ENCODE measurements at regions of chr16 and their contacts with region 1.

Region 1: GRCh38 chr16:11535471-11535870 is 51.2 kb downstream of the LITAF start:
- DNase-seq: no peak
- ATAC-seq: no peak
- H3K4me3 ChIP-seq: no peak overlapping the region
- H3K4me3 Mint-ChIP-seq: no peak overlapping the region
- H3K27ac ChIP-seq: no peak overlapping the region
- H3K27ac Mint-ChIP-seq: no peak overlapping the region
- H3K4me1 ChIP-seq: peaks cover 0 to 34% of the 10 kb centered on the region in 2 experiments
- H3K4me1 Mint-ChIP-seq: peaks cover 12 to 23% (median 15%) of the 10 kb centered on the region in 3 donors
- H3K27me3 ChIP-seq: no peaks in the 10 kb centered on the region
- H3K27me3 Mint-ChIP-seq: no peaks in the 10 kb centered on the region

Region 2: GRCh38 chr16:11484691-11485258 is 50.7 kb before region 1 on chr16:
- CTCF ChIA-PET with region 1: no interaction called
- POLR2A ChIA-PET with region 1: no interaction called
- DNase-seq: no peak
- ATAC-seq: no peak
- H3K4me3 ChIP-seq: no peak overlapping the region
- H3K4me3 Mint-ChIP-seq: no peak overlapping the region
- H3K27ac ChIP-seq: no peak overlapping the region
- H3K27ac Mint-ChIP-seq: no peak overlapping the region
- H3K4me1 ChIP-seq: no peaks in the 10 kb centered on the region
- H3K4me1 Mint-ChIP-seq: no peaks in the 10 kb centered on the region
- H3K27me3 ChIP-seq: no peaks in the 10 kb centered on the region
- H3K27me3 Mint-ChIP-seq: no peaks in the 10 kb centered on the region

Region 3: GRCh38 chr16:11560701-11561449 is 25.4 kb after region 1 on chr16:
- CTCF ChIA-PET with region 1: interaction called, 3 to 13 read pairs
- POLR2A ChIA-PET with region 1: interaction called in 1 of 2 experiments, 4 read pairs
- DNase-seq: peak; percentile 45 to 94 (median 82)
- ATAC-seq: peak; percentile 91 to 96 (median 93)
- H3K4me3 ChIP-seq: peak overlapping the region; percentile 48 to 64
- H3K4me3 Mint-ChIP-seq: peak overlapping the region; percentile 73 to 83 (median 79)
- H3K27ac ChIP-seq: peak overlapping the region; percentile 95
- H3K27ac Mint-ChIP-seq: peak overlapping the region; percentile 87 to 90
- H3K4me1 ChIP-seq: peaks cover 31 to 97% of the 10 kb centered on the region in 2 experiments
- H3K4me1 Mint-ChIP-seq: peaks cover 85 to 92% (median 87%) of the 10 kb centered on the region in 3 donors
- H3K27me3 ChIP-seq: no peaks in the 10 kb centered on the region
- H3K27me3 Mint-ChIP-seq: no peaks in the 10 kb centered on the region

Region 4: GRCh38 chr16:11576427-11577289 is 41.2 kb after region 1 on chr16:
- CTCF ChIA-PET with region 1: interaction called, 7 to 16 read pairs
- POLR2A ChIA-PET with region 1: no interaction called
- DNase-seq: no peak
- ATAC-seq: no peak
- H3K4me3 ChIP-seq: no peak overlapping the region
- H3K4me3 Mint-ChIP-seq: peak overlapping the region in 2 of 3 donors; percentile 32 to 51
- H3K27ac ChIP-seq: peak overlapping the region; percentile 32
- H3K27ac Mint-ChIP-seq: peak overlapping the region; percentile 58 to 79
- H3K4me1 ChIP-seq: peaks cover 8 to 94% of the 10 kb centered on the region in 2 experiments
- H3K4me1 Mint-ChIP-seq: peaks cover 74 to 89% (median 81%) of the 10 kb centered on the region in 3 donors
- H3K27me3 ChIP-seq: no peaks in the 10 kb centered on the region
- H3K27me3 Mint-ChIP-seq: no peaks in the 10 kb centered on the region

Region 5: DNA sequence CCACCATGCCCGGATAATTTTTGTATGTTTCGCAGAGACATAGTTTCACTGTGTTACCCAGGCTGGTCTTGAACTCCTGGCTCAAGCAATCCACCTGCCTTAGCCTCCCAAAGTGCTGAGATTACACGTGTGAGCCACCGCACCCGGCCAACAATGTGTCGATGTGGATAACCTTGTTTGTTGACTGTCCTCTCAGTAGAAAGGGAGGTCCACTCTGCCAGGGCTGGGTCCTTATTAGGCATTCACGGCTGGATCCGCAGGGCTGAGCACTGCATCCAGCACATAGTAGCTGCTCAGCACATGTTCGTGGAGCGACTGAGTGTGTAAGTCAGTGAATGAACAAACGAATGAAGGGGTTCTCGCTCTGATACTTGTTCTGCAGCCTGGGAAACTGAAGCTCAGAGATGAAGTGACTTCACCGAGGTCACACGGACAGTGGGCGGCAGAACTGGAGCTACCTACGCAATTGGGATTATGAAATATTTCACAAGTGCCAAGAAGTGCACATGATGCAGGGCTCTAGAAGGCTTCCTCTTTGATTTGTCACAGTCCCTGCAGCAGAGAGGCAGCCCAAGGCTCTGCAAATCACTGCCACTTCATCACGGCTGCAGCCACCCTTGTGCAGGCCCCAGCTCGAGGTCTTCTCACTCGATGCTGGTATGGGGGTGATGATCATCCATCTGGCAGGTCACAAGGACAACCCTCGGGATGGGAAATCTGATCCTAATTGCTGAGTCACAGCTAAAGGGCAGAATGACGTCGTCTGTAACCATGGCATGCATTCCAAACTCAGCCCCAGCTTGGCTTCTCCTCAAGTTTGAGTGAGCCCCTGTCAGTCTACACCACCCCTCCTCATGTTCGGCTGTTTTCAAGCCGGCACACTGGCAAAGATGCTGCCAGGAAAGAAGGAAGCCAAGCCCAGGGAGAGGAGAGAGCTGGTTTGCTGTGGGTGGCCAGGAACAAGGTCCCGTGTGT is 104.7 kb after region 1 on chr16:
- CTCF ChIA-PET with region 1: interaction called, 15 to 25 read pairs
- POLR2A ChIA-PET with region 1: no interaction called
- DNase-seq: peak in 5 of 35 experiments; percentile 14 to 53 (median 33)
- ATAC-seq: peak in 1 of 4 experiments; percentile 18
- H3K4me3 ChIP-seq: no peak overlapping the region
- H3K4me3 Mint-ChIP-seq: no peak overlapping the region
- H3K27ac ChIP-seq: no peak overlapping the region
- H3K27ac Mint-ChIP-seq: peak overlapping the region in 1 of 2 donors; percentile 48
- H3K4me1 ChIP-seq: peaks cover 4 to 17% of the 10 kb centered on the region in 2 experiments
- H3K4me1 Mint-ChIP-seq: peaks cover 15 to 31% (median 25%) of the 10 kb centered on the region in 3 donors
- H3K27me3 ChIP-seq: no peaks in the 10 kb centered on the region
- H3K27me3 Mint-ChIP-seq: no peaks in the 10 kb centered on the region

Region 6: GRCh38 chr16:11658894-11659708 is 123.6 kb after region 1 on chr16:
- CTCF ChIA-PET with region 1: interaction called in 1 of 2 experiments, 10 read pairs
- POLR2A ChIA-PET with region 1: no interaction called
- DNase-seq: no peak
- ATAC-seq: no peak
- H3K4me3 ChIP-seq: no peak overlapping the region
- H3K4me3 Mint-ChIP-seq: no peak overlapping the region
- H3K27ac ChIP-seq: no peak overlapping the region
- H3K27ac Mint-ChIP-seq: no peak overlapping the region
- H3K4me1 ChIP-seq: peaks cover 6 to 29% of the 10 kb centered on the region in 2 experiments
- H3K4me1 Mint-ChIP-seq: peaks cover 15 to 30% (median 18%) of the 10 kb centered on the region in 3 donors
- H3K27me3 ChIP-seq: peaks cover 0 to 6% of the 10 kb centered on the region in 2 experiments
- H3K27me3 Mint-ChIP-seq: no peaks in the 10 kb centered on the region

Region 7: GRCh38 chr16:11706180-11706742 is 170.8 kb after region 1 on chr16:
- CTCF ChIA-PET with region 1: interaction called, 5 to 10 read pairs
- POLR2A ChIA-PET with region 1: interaction called in 1 of 2 experiments, 4 read pairs
- DNase-seq: no peak
- ATAC-seq: no peak
- H3K4me3 ChIP-seq: no peak overlapping the region
- H3K4me3 Mint-ChIP-seq: no peak overlapping the region
- H3K27ac ChIP-seq: no peak overlapping the region
- H3K27ac Mint-ChIP-seq: no peak overlapping the region
- H3K4me1 ChIP-seq: no peaks in the 10 kb centered on the region
- H3K4me1 Mint-ChIP-seq: peaks cover 18 to 21% (median 20%) of the 10 kb centered on the region in 3 donors
- H3K27me3 ChIP-seq: no peaks in the 10 kb centered on the region
- H3K27me3 Mint-ChIP-seq: no peaks in the 10 kb centered on the region

Region 8: DNA sequence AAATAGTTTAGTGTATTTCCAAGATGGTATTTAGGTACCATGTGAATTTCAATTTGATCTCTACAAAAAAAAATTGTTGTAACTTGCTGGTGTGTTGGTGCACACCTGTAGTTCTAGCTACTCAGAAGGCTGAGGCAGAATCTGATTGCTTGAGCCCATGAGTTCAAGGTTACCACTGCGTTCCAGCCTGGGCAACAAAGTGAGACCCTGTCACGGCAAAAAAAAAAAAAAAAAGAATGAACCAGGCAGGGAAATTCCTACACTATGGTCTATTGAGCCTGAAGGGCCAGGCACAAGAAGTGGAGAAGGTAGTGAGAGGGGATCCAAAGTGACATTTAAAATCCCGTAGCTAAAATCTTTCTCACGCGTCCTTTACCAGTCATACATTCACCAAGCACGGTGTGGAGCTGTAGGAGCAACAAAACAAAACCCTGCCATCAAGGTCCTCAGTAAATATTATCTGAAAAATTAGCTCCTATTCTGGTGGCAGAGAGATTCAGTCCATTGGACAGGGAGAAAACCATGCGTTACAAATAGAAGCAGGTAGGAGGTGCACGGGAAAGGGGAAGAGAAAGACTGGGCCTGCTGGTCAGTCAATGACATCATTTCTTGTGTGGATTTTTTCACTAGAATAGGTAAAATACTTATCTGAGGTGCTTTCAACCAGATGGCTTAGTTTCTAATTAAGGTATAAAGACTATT is 179.9 kb after region 1 on chr16:
- CTCF ChIA-PET with region 1: interaction called, 9 to 27 read pairs
- POLR2A ChIA-PET with region 1: interaction called in 1 of 2 experiments, 3 read pairs
- DNase-seq: no peak
- ATAC-seq: peak in 1 of 4 experiments; percentile 16
- H3K4me3 ChIP-seq: no peak overlapping the region
- H3K4me3 Mint-ChIP-seq: no peak overlapping the region
- H3K27ac ChIP-seq: no peak overlapping the region
- H3K27ac Mint-ChIP-seq: peak overlapping the region in 1 of 2 donors; percentile 32
- H3K4me1 ChIP-seq: peaks cover 0 to 3% of the 10 kb centered on the region in 2 experiments
- H3K4me1 Mint-ChIP-seq: peaks cover 21 to 26% (median 23%) of the 10 kb centered on the region in 3 donors
- H3K27me3 ChIP-seq: no peaks in the 10 kb centered on the region
- H3K27me3 Mint-ChIP-seq: no peaks in the 10 kb centered on the region